PC-3 (cell line): ENCODE measurements at regions of chr3 and their contacts with region 1.

Region 1: GRCh38 chr3:9352917-9353752 is 9.7 kb upstream of the THUMPD3 start:
- DNase-seq: peak; percentile 80
- ATAC-seq: peak; percentile 52
- H3K4me3 ChIP-seq: peak overlapping the region; percentile 17; the same call in 1 of the 2 replicates
- H3K27ac ChIP-seq: peak overlapping the region; percentile 98
- H3K4me1 ChIP-seq: peaks cover 75% of the 10 kb centered on the region
- H3K27me3 ChIP-seq: no peaks in the 10 kb centered on the region
- CTCF ChIP-seq: peak; percentile 99

Region 2: DNA sequence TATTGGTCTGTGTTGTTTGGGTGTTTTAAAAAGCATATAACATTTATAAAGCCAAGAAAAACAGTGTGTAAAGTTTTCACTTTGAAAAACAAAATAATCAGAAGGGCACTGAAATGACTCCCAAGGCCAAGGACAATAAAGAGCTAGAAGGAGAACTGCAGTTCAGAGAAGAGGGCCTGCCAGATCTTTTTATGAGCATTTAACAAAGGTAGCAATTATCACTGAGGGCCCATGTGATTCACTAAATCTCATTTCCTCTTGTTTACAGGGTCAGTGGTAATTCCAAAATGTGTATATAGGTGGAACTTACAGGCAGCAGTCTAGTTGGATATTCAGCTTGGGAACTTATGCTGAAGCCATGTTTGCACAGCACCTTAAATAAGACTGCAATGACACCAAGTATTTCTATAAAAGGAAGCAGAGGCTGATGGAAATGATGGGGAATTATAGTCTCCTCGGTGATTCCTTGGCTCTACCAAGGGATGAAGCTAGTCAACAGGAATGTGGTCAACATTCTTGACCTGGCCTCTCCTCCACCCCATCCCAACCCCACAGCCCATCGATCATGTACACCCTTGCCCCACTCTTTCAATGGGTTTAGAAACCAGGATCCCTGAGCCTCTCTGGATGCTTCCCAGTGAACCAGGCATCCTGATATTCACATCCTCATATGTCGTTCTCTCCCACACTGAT is 44.7 kb before region 1 on chr3:
- CTCF ChIA-PET with region 1: no interaction called
- POLR2A ChIA-PET with region 1: no interaction called
- intact Hi-C with region 1: loop called (anchors 1 kb)
- DNase-seq: peak; percentile 27
- ATAC-seq: peak; percentile 73
- H3K4me3 ChIP-seq: no peak overlapping the region
- H3K27ac ChIP-seq: no peak overlapping the region
- H3K4me1 ChIP-seq: no peaks in the 10 kb centered on the region
- H3K27me3 ChIP-seq: no peaks in the 10 kb centered on the region
- CTCF ChIP-seq: no peak

Region 3: DNA sequence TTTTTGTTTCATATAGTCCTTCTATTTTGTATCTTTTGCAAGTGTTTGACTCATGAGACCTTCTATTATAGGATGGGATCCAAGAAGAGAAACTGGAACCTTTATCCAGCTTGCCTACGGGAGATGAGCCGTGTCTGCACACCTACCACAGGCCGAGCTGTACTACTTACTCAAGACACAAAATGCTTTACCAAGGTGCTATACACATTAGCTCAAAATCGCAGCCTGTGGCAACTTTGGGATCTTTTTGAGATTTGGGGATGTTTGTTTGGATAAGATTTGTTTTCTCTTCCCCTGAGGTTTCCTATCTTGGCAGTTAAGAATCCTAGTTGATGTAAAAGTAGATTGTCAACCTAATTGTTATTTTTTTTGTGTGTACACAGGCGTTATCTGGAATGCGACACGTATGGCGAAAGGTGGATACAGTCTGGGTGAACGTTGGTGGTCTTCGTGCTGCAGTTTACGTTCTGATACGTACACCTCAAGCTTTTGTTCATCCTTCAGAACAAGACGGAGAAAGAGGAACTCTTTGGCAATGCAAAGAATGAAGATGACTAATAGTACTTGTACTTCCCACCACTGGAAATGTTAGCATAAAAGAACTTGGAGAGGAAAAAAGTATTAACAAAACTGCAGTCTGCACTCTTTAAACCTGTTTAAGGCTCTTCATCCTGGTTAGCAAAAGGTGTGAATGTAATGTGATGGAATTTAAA is 31.2 kb after region 1 on chr3:
- CTCF ChIA-PET with region 1: interaction called, 3 read pairs
- POLR2A ChIA-PET with region 1: no interaction called
- intact Hi-C with region 1: loop called (anchors 2 kb)
- DNase-seq: no peak
- ATAC-seq: peak; percentile 33
- H3K4me3 ChIP-seq: no peak overlapping the region
- H3K27ac ChIP-seq: no peak overlapping the region
- H3K4me1 ChIP-seq: no peaks in the 10 kb centered on the region
- H3K27me3 ChIP-seq: no peaks in the 10 kb centered on the region
- CTCF ChIP-seq: no peak

Region 4: DNA sequence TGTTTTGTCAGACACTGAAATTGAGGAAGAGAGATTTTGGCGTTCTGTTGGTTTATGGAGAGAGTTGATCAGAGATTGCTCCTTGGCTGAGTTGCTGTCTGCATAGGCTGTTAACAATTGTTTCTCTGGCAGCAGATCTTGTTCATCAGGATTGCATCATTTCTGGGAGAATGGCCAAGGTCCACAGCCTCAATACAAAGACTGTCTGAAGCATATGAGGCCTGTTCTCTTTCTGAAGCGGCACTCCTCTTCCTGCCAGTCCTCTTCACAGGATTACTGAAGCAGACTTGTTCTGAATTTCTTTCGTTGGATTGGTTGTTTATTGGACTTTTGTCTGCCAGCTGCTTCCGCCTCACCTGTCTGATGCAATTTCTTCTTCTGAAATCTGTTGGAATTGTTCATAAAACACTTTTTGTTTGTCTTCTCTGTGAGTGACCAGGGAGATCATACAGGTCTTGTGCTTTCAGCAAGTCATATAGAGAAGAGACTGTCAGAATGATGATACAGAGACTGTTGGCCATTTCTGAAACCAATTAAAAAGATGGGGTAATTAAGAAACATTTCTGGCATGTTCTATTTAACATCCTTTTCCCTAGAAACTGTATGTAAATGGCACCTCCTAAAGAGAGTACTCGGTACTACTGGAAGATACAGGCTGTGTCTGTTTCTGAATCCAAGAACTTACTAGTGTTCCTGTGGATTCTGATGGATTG is 69.7 kb after region 1 on chr3:
- CTCF ChIA-PET with region 1: interaction called, 12 read pairs
- POLR2A ChIA-PET with region 1: no interaction called
- intact Hi-C with region 1: loop called (anchors 1 kb)
- DNase-seq: peak; percentile 98
- ATAC-seq: peak; percentile 96
- H3K4me3 ChIP-seq: peak overlapping the region; percentile 31; the same call in 1 of the 2 replicates
- H3K27ac ChIP-seq: peak overlapping the region; percentile 85
- H3K4me1 ChIP-seq: peaks cover 40% of the 10 kb centered on the region
- H3K27me3 ChIP-seq: no peaks in the 10 kb centered on the region
- CTCF ChIP-seq: peak; percentile 76